ENCODE measurements at regions of chr10 and their contacts with region 1.

Region 1: DNA sequence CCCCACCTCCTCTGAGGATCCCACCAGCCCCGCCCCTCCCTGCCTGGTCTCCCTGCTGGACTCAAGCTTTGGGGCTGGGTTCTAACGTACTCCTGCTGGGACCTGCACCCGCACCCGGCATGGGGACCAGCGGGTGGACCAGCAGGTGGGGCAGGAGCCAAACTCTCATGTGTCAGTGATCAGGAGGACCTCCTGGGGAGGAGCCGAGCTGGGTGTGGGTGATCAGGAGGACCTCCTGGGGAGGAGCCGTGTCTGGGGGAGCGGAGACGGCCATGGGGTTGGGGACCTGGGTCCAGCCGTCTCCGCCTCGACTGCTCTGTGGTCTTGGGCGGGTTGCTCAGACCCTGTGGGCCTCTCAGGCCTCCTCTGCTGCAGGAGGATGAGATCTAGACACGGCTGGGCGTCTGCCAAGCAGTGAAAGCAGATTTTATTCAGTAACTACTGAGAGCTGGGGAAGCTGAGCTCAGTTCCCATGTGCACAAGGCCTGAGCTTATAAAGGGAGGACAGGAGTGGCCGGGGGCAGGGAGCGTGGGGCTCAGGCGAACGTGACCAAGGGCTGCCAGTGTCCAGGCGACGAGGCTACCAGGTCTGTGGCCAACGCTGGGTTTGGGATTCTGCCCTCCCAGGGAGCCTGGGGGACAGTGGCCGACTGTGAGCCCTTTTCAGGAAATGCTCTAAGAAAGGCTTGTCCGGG is 33.6 kb upstream of the UTF1 start:
- DNase-seq: no peak
- H3K4me3 ChIP-seq: no peak overlapping the region
- H3K27ac ChIP-seq: no peak overlapping the region
- H3K4me1 ChIP-seq: peaks cover 3% of the 10 kb centered on the region
- H3K27me3 ChIP-seq: no peaks in the 10 kb centered on the region
- CTCF ChIP-seq: no peak

Region 2: DNA sequence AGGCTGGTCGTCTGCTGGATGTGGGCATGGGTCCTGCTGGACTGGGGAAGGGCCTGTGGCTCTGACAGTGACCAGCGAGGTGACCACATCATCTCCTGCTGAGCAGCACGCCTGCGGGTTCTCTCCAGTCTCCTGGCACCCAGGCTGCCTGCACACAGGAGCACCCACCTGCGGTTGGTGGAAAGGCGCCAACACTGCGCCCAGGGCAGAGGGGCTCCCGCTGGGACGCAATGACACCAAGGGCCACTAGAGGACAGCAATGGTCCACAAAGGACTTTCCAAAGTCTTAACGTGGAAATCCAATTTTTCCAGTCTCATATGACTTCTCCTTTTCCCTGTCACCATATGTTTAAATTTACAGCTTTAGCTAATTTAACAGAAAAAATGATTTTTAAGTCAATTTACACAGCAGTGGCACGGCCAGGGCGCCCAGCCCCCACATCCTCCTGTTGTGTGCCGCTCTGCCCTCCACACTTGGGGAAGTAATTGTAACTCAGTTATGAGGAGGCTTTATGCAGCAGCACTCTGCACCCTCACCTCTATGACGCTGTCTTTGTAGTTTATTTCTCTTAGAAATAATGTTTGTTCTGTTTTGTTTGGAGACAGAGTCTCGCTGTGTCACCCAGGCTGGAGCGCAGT is 292.1 kb before region 1 on chr10:
- CTCF ChIA-PET with region 1: no interaction called
- dilution Hi-C with region 1: no loop called
- in situ Hi-C with region 1: no loop called
- intact Hi-C with region 1: no loop called
- DNase-seq: peak; percentile 23
- H3K4me3 ChIP-seq: no peak overlapping the region
- H3K27ac ChIP-seq: no peak overlapping the region
- H3K4me1 ChIP-seq: no peaks in the 10 kb centered on the region
- H3K27me3 ChIP-seq: no peaks in the 10 kb centered on the region
- CTCF ChIP-seq: peak; percentile 43 to 53

Region 3: DNA sequence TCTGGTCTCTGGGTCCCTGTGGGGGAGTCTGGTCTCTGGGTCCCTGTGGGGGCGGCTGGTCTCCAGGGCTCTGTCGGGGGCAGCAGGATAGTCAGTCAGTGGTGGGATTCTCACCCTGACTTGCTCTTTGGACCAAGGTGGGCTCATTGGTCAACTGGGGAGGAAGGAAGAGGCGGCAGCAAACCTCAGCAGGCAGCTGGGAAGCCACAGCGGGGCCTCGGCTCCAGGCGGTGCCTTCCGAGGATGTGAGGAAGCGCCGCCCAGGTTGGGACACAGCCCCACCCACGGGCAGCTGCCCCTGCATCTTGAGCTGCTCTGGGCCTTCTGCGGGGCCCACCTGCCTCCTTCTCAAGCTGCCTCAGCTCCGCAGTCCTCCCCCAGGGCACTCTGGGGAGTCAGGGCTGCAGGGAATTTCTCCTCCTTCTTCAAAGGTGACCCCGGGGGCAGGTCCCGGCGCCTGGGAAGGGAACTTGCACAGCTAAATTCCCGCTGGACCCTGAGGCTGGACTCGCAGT is 56.8 kb before region 1 on chr10:
- CTCF ChIA-PET with region 1: no interaction called
- dilution Hi-C with region 1: no loop called
- in situ Hi-C with region 1: no loop called
- intact Hi-C with region 1: no loop called
- DNase-seq: no peak
- H3K4me3 ChIP-seq: no peak overlapping the region
- H3K27ac ChIP-seq: no peak overlapping the region
- H3K4me1 ChIP-seq: no peaks in the 10 kb centered on the region
- H3K27me3 ChIP-seq: peaks cover 2% of the 10 kb centered on the region
- CTCF ChIP-seq: no peak

Region 4: GRCh38 chr10:133214468-133215410 is 18.4 kb after region 1 on chr10:
- CTCF ChIA-PET with region 1: no interaction called
- dilution Hi-C with region 1: no loop called
- in situ Hi-C with region 1: no loop called
- intact Hi-C with region 1: no loop called
- DNase-seq: no peak
- H3K4me3 ChIP-seq: no peak overlapping the region
- H3K27ac ChIP-seq: no peak overlapping the region
- H3K4me1 ChIP-seq: no peaks in the 10 kb centered on the region
- H3K27me3 ChIP-seq: peaks cover 3% of the 10 kb centered on the region
- CTCF ChIP-seq: no peak

Region 5: DNA sequence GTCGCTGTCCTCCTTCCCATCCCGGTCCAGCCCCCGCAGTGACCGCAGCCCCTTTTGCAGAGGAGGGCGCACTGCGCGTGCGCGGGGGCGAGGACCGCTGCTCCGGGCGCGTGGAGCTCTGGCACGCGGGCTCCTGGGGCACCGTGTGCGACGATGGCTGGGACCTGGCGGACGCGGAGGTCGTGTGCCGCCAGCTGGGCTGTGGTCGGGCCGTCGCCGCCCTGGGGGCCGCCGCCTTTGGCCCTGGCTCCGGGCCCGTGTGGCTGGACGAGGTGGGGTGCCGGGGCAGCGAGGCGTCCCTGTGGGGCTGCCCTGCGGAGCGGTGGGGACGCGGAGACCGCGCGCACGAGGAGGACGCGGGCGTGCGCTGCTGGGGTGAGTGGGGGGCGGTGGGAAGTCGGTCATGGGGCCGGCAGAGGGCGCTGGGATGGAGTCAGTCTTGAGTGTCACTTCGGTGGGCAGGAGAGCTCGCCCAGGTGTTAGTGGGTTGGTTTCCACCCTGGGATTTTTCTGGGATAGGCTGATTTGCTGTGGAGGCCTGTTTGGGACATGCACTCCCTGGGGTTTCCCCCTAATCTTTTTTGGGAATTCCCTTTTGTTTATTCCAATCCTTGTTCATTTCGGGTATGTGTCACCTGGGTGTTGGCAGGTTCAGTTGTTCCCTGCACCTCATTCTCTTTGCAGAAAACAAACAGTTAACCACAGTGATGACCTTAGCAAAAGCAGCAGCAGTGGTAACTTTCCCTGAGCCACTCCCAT is 269.0 kb after region 1 on chr10:
- CTCF ChIA-PET with region 1: no interaction called
- dilution Hi-C with region 1: loop called (anchors 10 kb)
- in situ Hi-C with region 1: no loop called
- intact Hi-C with region 1: no loop called
- DNase-seq: peak; percentile 42
- H3K4me3 ChIP-seq: no peak overlapping the region
- H3K27ac ChIP-seq: no peak overlapping the region
- H3K4me1 ChIP-seq: no peaks in the 10 kb centered on the region
- H3K27me3 ChIP-seq: no peaks in the 10 kb centered on the region
- CTCF ChIP-seq: no peak

Measured in mammary epithelial cell (primary cell).